Esophagus squamous epithelium (tissue), 5 donors: ENCODE measurements at regions of chr5 and their contacts with region 1.

Region 1: DNA sequence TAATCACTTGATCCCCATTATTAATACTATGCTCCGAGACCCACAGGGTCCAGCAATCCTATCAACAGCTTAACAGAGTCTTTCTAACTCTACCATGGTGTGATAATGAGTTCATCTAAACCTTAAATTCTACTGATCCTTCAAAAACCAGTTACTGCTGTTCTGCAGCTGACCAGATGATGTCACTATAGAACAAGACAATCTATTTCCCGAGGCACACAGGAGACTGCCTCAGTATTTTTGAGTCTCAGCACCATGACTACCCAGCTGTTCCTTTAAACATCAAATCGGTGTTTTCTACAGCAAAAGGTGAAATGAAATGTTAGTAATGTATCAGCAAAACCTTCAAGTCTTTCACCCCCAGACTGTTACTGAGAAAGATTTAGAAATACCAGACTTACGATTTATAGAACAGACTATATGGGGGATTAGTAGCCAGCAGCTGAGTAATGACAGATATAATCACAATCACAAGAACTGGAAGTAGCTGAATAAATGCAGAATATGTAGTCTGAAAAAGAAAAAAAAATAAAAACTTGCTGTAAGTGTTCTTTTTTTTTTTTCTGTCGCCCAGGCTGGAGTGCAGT is 16.9 kb downstream of the DNAJC18 start:
- DNase-seq: no peak
- H3K4me3 ChIP-seq: no peak overlapping the region
- H3K27ac ChIP-seq: no peak overlapping the region
- H3K4me1 ChIP-seq: peaks cover 0 to 29% (median 8%) of the 10 kb centered on the region in 3 donors
- H3K27me3 ChIP-seq: no peaks in the 10 kb centered on the region
- CTCF ChIP-seq: peak; percentile 63 to 87 (median 74)
- POLR2A ChIP-seq: no peak

Region 2: DNA sequence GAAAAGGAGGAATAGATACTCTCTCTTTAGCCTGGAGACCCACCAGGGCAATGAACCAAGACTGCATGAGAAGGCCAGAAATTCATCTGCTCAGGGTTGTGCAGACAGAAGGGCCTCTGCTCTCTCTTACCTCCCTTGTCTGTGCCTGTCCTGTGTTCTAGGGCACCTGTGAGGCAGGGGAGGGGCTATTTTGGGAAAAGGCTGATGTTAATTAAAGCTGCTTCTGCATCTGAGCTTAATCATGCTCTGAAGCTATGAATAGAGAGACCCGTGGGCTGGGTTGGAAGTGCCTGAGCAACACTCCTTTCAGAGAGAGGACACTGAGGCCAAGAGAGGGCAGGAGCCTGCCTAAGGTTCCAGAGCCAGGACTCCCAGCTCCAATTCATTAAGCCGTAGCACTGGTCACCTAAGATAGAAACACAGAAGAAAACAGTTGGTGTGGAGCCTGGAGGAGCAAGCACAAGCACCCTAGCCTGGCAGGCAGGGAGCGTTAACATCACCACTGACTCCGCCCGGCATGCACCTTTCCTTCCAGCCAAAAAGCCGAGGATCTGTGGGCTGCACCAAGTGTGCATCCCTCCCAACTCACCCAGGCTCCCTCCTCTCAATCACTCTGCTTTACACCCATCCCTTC is 91.6 kb after region 1 on chr5:
- intact Hi-C with region 1: loop called (anchors 5 kb)
- DNase-seq: no peak
- H3K4me3 ChIP-seq: no peak overlapping the region
- H3K27ac ChIP-seq: peak overlapping the region in 2 of 4 donors; percentile 19 to 27
- H3K4me1 ChIP-seq: peaks cover 11 to 43% (median 17%) of the 10 kb centered on the region in 3 donors
- H3K27me3 ChIP-seq: no peaks in the 10 kb centered on the region
- CTCF ChIP-seq: no peak
- POLR2A ChIP-seq: no peak